Activated T-helper 1 cell treated with anti-CD3 and anti-CD28 coated beads, Interleukin-12 subunit alpha, Interleukin-12 subunit beta, Interleukin-2, Interleukin-4 antibody, amounts not matched to agents 30 ng/mL and 10 ng/mL and 1 ng/mL, durations not matched to agents 14 hours and 24 hours and 36 hours (primary cell): ENCODE measurements at regions of chr9 and their contacts with region 1.

Region 1: DNA sequence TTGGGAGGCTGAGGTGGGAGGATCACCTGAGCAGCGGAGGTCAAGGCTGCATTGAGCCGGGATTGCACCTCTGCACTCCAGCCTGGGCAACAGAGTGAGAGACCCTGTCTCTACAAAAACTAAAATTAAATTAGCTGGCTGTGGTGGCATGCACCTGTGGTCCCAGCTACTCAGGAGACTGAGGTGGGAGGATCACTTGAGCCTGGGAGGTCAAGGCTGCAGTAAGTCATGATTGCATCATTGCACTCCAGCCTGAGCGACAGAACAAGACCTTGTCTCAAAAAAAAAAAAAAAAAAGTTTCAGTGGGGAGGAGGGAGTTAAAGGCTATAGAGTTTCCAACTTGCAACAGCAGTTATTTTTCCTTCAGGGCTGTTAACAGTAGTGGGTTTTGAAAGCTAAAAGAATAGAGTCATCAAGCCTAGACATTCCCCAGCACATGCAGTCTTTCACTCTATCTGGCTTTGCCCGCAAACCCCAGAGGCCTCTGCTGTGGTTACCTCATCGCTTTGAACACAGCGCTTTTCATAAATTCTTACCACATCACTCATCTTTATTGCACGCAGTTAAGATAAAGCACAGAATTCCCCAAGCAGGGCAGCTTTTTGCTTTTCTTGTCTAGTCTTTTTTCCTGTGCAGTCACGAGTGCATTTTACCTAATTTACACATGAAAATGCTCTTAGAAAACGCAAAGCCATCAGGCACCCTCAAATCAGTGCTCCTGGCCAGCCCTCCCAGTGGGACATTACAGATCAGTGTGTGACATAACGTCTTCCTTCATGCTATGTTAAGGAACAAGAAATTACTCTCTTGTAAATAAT is 8.7 kb upstream of the SLC2A8 start:
- DNase-seq: peak; percentile 86
- H3K4me3 Mint-ChIP-seq: peak overlapping the region; percentile 37
- H3K27ac Mint-ChIP-seq: peak overlapping the region; percentile 89
- H3K4me1 Mint-ChIP-seq: peaks cover 24% of the 10 kb centered on the region
- H3K27me3 Mint-ChIP-seq: peaks cover 51% of the 10 kb centered on the region

Region 2: GRCh38 chr9:126985870-126986498 is 402.3 kb before region 1 on chr9:
- intact Hi-C with region 1: loop called (anchors 1 kb)
- DNase-seq: peak; percentile 85
- H3K4me3 Mint-ChIP-seq: peak overlapping the region; percentile 80
- H3K27ac Mint-ChIP-seq: peak overlapping the region; percentile 87
- H3K4me1 Mint-ChIP-seq: peaks cover 75% of the 10 kb centered on the region
- H3K27me3 Mint-ChIP-seq: peaks cover 32% of the 10 kb centered on the region

Region 3: GRCh38 chr9:127244609-127245601 is 143.3 kb before region 1 on chr9:
- intact Hi-C with region 1: loop called (anchors 2 kb)
- DNase-seq: peak; percentile 94
- H3K4me3 Mint-ChIP-seq: peak overlapping the region; percentile 83
- H3K27ac Mint-ChIP-seq: peak overlapping the region; percentile 21
- H3K4me1 Mint-ChIP-seq: peaks cover 12% of the 10 kb centered on the region
- H3K27me3 Mint-ChIP-seq: peaks cover 9% of the 10 kb centered on the region

Region 4: DNA sequence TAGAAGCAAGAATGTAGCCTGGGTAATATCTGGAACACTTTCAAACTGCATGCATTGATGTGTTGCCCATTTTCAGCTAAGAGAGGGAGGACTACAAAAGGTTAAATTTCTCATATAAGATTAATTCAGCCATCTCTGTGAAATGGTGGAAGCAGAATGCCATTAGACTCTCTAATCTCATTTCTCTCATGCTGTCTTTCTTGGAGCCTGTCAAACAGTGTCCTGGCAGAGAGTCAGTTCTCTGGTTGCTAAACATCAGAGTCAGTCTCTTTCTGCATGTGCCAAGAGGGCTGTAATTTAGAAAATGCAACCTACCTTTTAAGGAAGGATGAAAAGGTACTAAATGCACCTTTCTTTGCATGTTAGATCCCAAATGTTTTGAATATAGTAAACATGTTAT is 124.6 kb before region 1 on chr9:
- intact Hi-C with region 1: no loop called
- DNase-seq: no peak
- H3K4me3 Mint-ChIP-seq: no peak overlapping the region
- H3K27ac Mint-ChIP-seq: no peak overlapping the region
- H3K4me1 Mint-ChIP-seq: no peaks in the 10 kb centered on the region
- H3K27me3 Mint-ChIP-seq: peaks cover 30% of the 10 kb centered on the region

Region 5: DNA sequence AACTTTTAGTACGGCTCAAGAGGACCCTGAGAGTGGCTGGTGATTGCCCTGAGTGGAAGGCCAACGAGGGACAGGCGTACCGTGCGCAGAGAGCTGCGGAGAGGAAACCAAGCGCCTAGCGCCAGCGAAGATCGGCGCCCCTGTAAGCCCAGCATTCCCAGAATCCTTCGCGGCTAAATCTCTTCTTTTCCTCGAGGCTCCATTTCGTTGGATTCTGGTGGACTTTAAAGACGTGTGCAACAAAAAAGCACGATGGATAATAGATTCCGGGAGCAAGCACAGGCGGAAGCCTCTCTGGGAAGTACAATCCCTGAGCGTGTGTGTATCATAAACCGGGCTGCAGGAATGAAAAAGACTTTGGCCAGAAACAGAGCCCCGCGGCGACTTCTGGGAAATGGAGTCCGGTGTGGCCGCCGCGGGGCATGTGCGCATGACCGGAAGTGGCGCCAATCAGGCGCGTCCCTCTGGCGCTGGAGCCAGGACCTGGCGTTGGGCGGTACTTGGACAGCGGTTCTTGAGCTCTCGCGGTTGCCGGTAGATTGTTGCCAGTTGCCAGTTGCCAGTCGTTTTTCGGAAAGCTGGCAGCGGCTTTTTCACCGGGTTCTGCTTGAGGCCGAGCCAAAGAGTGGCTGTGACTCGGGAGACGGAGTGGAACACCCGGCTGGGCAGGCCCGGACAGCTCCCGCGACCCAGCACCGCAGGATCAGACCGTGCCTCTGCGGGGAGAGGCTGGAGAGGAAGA is 35.9 kb after region 1 on chr9 and contains the start of gene ZNF79:
- intact Hi-C with region 1: loop called (anchors 1 kb)
- DNase-seq: peak; percentile 92
- H3K4me3 Mint-ChIP-seq: peak within 1 kb of the TSS; percentile 99
- H3K27ac Mint-ChIP-seq: peak within 1 kb of the TSS; percentile 97
- H3K4me1 Mint-ChIP-seq: peaks cover 59% of the 10 kb centered on the region
- H3K27me3 Mint-ChIP-seq: peaks cover 3% of the 10 kb centered on the region
- total RNA-seq, gene ZNF79: 21.7 and 23.1 TPM in 2 replicates

Region 6: DNA sequence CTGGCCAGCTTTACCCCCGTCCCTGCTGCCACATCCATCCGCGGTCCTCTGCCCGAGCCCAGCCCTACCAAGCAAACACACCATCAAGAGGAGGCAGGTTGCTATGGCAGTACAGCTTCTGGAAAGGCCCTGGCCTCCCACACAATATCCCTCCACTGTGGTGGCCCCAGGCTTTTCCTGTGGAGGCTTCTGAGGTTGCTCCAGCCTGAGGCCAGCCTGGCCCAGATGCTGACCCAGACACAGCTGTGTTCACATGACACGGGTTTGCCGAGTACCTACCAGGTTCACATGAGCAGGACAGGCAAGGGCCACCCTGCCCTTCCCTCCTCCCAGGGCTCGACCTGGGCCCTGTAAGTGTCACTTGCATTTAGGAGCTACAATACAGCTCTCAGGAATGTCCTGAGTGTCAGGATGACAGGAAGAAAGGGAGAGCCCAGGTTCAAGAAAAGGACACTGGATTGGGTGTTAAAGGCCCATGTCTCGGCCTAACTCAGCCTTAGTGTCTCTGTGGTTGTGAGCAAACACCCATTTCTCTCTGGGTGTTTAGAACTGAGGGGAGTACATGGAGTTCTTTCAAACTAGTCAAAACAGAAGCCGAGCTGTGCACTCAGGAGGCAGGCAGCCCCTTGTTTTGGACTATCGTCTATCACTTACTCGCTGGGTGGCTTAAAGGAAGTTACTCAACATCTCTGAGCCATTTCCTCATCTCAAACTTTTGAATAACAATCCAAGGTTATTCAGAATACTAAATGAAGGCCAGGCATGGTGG is 638.7 kb after region 1 on chr9:
- intact Hi-C with region 1: loop called (anchors 5 kb)
- DNase-seq: peak; percentile 37
- H3K4me3 Mint-ChIP-seq: peak overlapping the region; percentile 60
- H3K27ac Mint-ChIP-seq: peak overlapping the region; percentile 93
- H3K4me1 Mint-ChIP-seq: peaks cover 81% of the 10 kb centered on the region
- H3K27me3 Mint-ChIP-seq: peaks cover 4% of the 10 kb centered on the region